B cell (primary cell): ENCODE measurements at regions of chr12 and their contacts with region 1.

Region 1: GRCh38 chr12:111298582-111299436 is 70.1 kb downstream of the PHETA1 start:
- DNase-seq: peak; percentile 66
- ATAC-seq: peak; percentile 49
- H3K4me3 ChIP-seq: no peak overlapping the region
- H3K4me3 Mint-ChIP-seq: no peak overlapping the region
- H3K27ac ChIP-seq: no peak overlapping the region
- H3K27ac Mint-ChIP-seq: no peak overlapping the region
- H3K4me1 ChIP-seq: no peaks in the 10 kb centered on the region
- H3K4me1 Mint-ChIP-seq: no peaks in the 10 kb centered on the region
- H3K27me3 ChIP-seq: peaks cover 0 to 8% (median 0%) of the 10 kb centered on the region in 4 experiments
- H3K27me3 Mint-ChIP-seq: peaks cover 4% of the 10 kb centered on the region
- CTCF ChIP-seq: peak; percentile 86

Region 2: DNA sequence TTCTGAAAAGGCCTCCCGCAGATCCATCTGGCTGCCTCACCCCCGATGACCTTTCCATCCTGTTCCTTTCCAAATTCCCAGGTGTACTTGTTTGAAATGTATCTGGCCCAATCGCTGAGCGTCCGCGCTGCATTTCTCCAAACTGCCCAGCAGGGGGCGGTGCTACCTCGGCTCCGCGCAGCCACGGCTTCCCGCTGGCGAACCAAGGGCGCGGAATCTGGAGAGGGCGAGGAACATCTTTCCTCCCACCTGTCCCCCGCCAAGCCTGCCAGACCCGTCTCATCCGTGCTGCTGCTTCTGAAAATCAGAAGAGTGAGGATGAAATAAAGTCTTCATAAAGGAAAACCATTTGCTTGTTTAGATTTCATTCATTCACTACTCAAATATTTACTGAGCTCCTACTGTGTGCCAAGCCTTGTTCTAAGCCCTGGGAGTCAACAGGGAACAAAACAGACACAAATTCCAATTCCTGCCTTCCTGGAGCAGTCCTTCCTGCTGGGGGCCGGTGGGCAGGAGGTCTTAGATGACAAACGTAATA is 361.6 kb before region 1 on chr12:
- CTCF ChIA-PET with region 1: interaction called, 4 read pairs
- POLR2A ChIA-PET with region 1: no interaction called
- intact Hi-C with region 1: loop called (anchors 5 kb)
- DNase-seq: peak; percentile 78
- ATAC-seq: peak; percentile 51
- H3K4me3 ChIP-seq: peak overlapping the region in 1 of 5 experiments; percentile 26
- H3K4me3 Mint-ChIP-seq: peak overlapping the region; percentile 19
- H3K27ac ChIP-seq: no peak overlapping the region
- H3K27ac Mint-ChIP-seq: no peak overlapping the region
- H3K4me1 ChIP-seq: peaks cover 3 to 8% of the 10 kb centered on the region in 2 donors
- H3K4me1 Mint-ChIP-seq: peaks cover 6% of the 10 kb centered on the region
- H3K27me3 ChIP-seq: peaks cover 0 to 18% (median 0%) of the 10 kb centered on the region in 4 experiments
- H3K27me3 Mint-ChIP-seq: peaks cover 30% of the 10 kb centered on the region
- CTCF ChIP-seq: peak; percentile 100